SK-N-SH (cell line): ENCODE measurements at regions of chr3 and their contacts with region 1.

Region 1: GRCh38 chr3:129942296-129942695 is 32.2 kb upstream of the TRH start:
- DNase-seq: peak; percentile 86
- H3K4me3 ChIP-seq: peak overlapping the region in 1 of 2 experiments; percentile 30; a peak in 1 of 4 replicates
- H3K27ac ChIP-seq: no peak overlapping the region
- H3K4me1 ChIP-seq: no peaks in the 10 kb centered on the region
- H3K27me3 ChIP-seq: no peaks in the 10 kb centered on the region; the same call in 1 of the 2 replicates
- CTCF ChIP-seq: peak; percentile 73
- EP300 ChIP-seq: no peak
- RAD21 ChIP-seq: peak; percentile 92

Region 2: GRCh38 chr3:129650256-129650872 is 291.9 kb before region 1 on chr3:
- CTCF ChIA-PET with region 1: interaction called, 11 read pairs
- POLR2A ChIA-PET with region 1: no interaction called
- DNase-seq: peak; percentile 58
- H3K4me3 ChIP-seq: peak overlapping the region in 1 of 2 experiments; percentile 27; a peak in 1 of 4 replicates
- H3K27ac ChIP-seq: peak overlapping the region; percentile 28 to 52; a peak in 2 of 4 replicates
- H3K4me1 ChIP-seq: peaks cover 8 to 24% of the 10 kb centered on the region in 2 experiments
- H3K27me3 ChIP-seq: no peaks in the 10 kb centered on the region
- CTCF ChIP-seq: peak; percentile 76
- EP300 ChIP-seq: no peak
- RAD21 ChIP-seq: peak; percentile 91

Region 3: GRCh38 chr3:129768728-129769127 is 173.6 kb before region 1 on chr3:
- CTCF ChIA-PET with region 1: no interaction called
- POLR2A ChIA-PET with region 1: no interaction called
- DNase-seq: peak; percentile 21
- H3K4me3 ChIP-seq: no peak overlapping the region
- H3K27ac ChIP-seq: no peak overlapping the region
- H3K4me1 ChIP-seq: no peaks in the 10 kb centered on the region; a peak in 1 of 4 replicates
- H3K27me3 ChIP-seq: no peaks in the 10 kb centered on the region
- CTCF ChIP-seq: no peak
- EP300 ChIP-seq: no peak
- RAD21 ChIP-seq: no peak

Region 4: GRCh38 chr3:129961134-129961541 is 18.8 kb after region 1 on chr3:
- CTCF ChIA-PET with region 1: interaction called, 39 read pairs
- POLR2A ChIA-PET with region 1: no interaction called
- DNase-seq: no peak
- H3K4me3 ChIP-seq: no peak overlapping the region
- H3K27ac ChIP-seq: no peak overlapping the region
- H3K4me1 ChIP-seq: no peaks in the 10 kb centered on the region
- H3K27me3 ChIP-seq: no peaks in the 10 kb centered on the region; the same call in 1 of the 2 replicates
- CTCF ChIP-seq: no peak
- EP300 ChIP-seq: no peak
- RAD21 ChIP-seq: no peak

Region 5: DNA sequence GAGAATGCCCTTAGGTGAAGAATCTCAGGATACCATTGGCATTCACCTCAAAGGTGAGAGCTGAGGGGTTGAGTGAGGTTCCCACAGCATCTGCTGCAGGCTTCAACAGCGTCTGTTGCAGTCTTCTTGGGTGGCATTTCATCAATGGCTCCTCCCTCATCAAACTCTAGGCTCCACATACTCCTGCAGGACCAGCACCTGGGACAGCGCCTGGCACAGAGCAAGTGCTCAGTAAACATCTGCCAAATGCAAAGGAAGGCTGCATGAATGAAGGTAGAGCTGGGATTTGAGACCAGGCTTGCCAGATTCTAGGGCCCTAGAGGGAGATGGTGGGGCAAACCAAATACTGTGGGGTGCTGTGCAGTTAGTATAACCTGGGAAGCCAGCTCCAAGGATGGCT is 41.8 kb after region 1 on chr3:
- CTCF ChIA-PET with region 1: interaction called, 25 read pairs
- POLR2A ChIA-PET with region 1: no interaction called
- DNase-seq: no peak
- H3K4me3 ChIP-seq: no peak overlapping the region
- H3K27ac ChIP-seq: no peak overlapping the region
- H3K4me1 ChIP-seq: peaks cover 0 to 11% of the 10 kb centered on the region in 2 experiments; a peak in 1 of 4 replicates
- H3K27me3 ChIP-seq: peaks cover 19% of the 10 kb centered on the region; the same call in 1 of the 2 replicates
- CTCF ChIP-seq: no peak
- EP300 ChIP-seq: no peak
- RAD21 ChIP-seq: no peak

Region 6: DNA sequence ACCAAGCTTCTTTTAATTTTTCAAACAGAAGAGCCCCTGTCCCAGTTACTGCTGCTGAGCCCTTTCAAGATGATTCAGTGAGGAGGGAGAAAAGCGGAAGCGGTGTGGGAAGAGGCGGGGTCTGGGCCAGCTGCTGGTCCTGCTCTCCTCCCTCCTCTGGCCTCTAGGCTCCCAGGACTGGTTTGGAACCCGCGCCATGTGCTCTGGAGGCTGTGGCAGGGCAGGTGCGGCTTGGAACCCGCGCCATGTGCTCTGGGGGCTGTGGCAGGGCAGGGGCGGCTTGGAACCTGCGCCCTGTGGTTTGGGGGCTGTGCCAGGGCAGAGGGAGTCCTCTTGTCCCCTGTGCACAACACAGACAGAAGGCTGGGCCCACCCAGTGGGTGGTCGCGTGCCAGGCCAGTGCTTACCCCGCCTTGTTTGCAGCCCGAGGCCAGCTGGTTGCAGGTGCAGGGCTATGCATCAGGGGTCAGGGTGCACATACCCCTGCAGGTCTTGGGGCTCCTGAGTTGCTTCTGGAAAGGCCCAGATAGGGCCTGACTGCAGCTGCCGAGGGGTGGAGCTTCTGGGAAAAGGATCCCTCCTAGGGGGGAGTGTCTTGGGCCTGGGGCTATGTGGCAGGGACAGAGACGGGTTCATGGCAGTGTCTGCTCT is 151.6 kb after region 1 on chr3:
- CTCF ChIA-PET with region 1: interaction called, 146 read pairs
- POLR2A ChIA-PET with region 1: no interaction called
- DNase-seq: no peak
- H3K4me3 ChIP-seq: no peak overlapping the region
- H3K27ac ChIP-seq: no peak overlapping the region
- H3K4me1 ChIP-seq: no peaks in the 10 kb centered on the region; a peak in 1 of 4 replicates
- H3K27me3 ChIP-seq: no peaks in the 10 kb centered on the region
- CTCF ChIP-seq: no peak
- EP300 ChIP-seq: no peak
- RAD21 ChIP-seq: no peak

Region 7: GRCh38 chr3:130506031-130506430 is 563.7 kb after region 1 on chr3:
- CTCF ChIA-PET with region 1: no interaction called
- POLR2A ChIA-PET with region 1: no interaction called
- DNase-seq: no peak
- H3K4me3 ChIP-seq: no peak overlapping the region
- H3K27ac ChIP-seq: no peak overlapping the region
- H3K4me1 ChIP-seq: no peaks in the 10 kb centered on the region
- H3K27me3 ChIP-seq: no peaks in the 10 kb centered on the region
- CTCF ChIP-seq: no peak
- EP300 ChIP-seq: no peak
- RAD21 ChIP-seq: no peak